Activated T-helper 1 cell treated with anti-CD3 and anti-CD28 coated beads, Interleukin-12 subunit alpha, Interleukin-12 subunit beta, Interleukin-2, Interleukin-4 antibody, amounts not matched to agents 30 ng/mL and 10 ng/mL and 1 ng/mL, durations not matched to agents 14 hours and 24 hours and 36 hours (primary cell): ENCODE measurements at regions of chr3 and their contacts with region 1.

Region 1: GRCh38 chr3:112074721-112075497 is 11.3 kb upstream of the C3orf52 start:
- DNase-seq: peak; percentile 33
- H3K4me3 Mint-ChIP-seq: peak overlapping the region; percentile 61
- H3K27ac Mint-ChIP-seq: peak overlapping the region; percentile 68
- H3K4me1 Mint-ChIP-seq: peaks cover 49% of the 10 kb centered on the region
- H3K27me3 Mint-ChIP-seq: peaks cover 2% of the 10 kb centered on the region

Region 2: GRCh38 chr3:112056451-112056978 is 18.4 kb before region 1 on chr3:
- intact Hi-C with region 1: loop called (anchors 2 kb)
- DNase-seq: no peak
- H3K4me3 Mint-ChIP-seq: no peak overlapping the region
- H3K27ac Mint-ChIP-seq: peak overlapping the region; percentile 53
- H3K4me1 Mint-ChIP-seq: peaks cover 31% of the 10 kb centered on the region
- H3K27me3 Mint-ChIP-seq: peaks cover 4% of the 10 kb centered on the region

Region 3: GRCh38 chr3:112086076-112086854 is 11.4 kb after region 1 on chr3 and contains the start of gene C3orf52:
- intact Hi-C with region 1: loop called (anchors 1 kb)
- DNase-seq: peak; percentile 74
- H3K4me3 Mint-ChIP-seq: peak within 1 kb of the TSS; percentile 91
- H3K27ac Mint-ChIP-seq: peak within 1 kb of the TSS; percentile 88
- H3K4me1 Mint-ChIP-seq: peaks cover 54% of the 10 kb centered on the region
- H3K27me3 Mint-ChIP-seq: peaks cover 2% of the 10 kb centered on the region
- total RNA-seq, gene C3orf52: 12.4 and 12.8 TPM in 2 replicates

Region 4: DNA sequence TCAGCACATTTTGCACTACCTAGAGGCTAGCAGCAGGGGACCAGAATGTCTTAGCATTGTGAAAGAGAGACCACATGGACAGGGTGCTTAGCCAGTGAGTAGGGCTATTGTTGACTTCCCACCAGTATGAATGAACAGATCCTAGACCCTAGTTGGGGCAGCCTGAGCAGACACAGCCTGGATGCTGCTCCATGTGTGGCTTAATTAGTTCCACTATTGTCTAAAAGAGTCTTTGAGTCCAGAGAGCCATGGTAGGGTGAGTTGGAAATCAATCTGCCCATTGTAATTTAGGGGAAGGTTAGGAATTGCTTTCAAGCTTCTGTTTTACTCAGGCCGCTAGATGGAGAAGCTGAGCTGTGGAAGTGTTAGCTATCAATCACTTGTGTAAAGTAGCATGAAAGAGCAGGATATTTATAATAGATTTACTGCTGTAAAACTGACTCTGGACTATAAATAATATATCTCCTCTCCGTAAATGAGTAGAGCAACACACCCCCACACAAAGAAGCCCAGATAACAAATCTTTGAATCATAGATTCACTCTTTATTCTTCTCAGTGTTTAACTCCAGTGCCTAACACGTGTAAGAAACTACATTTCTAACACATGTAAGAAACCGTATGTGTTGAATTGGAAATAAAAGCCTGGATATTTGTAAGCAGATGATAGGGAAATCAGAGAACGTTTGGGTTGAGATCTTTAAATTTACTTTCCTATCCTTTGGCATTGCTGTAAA is 62.2 kb after region 1 on chr3:
- intact Hi-C with region 1: loop called (anchors 2 kb)
- DNase-seq: no peak
- H3K4me3 Mint-ChIP-seq: no peak overlapping the region
- H3K27ac Mint-ChIP-seq: peak overlapping the region; percentile 6
- H3K4me1 Mint-ChIP-seq: peaks cover 54% of the 10 kb centered on the region
- H3K27me3 Mint-ChIP-seq: no peaks in the 10 kb centered on the region